ENCODE measurements at regions of chr5 and their contacts with region 1.

Region 1: GRCh38 chr5:76292620-76293322 is 110.3 kb upstream of the IQGAP2 start:
- DNase-seq: no peak
- ATAC-seq: no peak
- H3K4me3 Mint-ChIP-seq: no peak overlapping the region
- H3K27ac Mint-ChIP-seq: no peak overlapping the region
- H3K4me1 Mint-ChIP-seq: no peaks in the 10 kb centered on the region
- H3K27me3 Mint-ChIP-seq: no peaks in the 10 kb centered on the region

Region 2: GRCh38 chr5:76252437-76252836 is 40.3 kb before region 1 on chr5:
- CTCF ChIA-PET with region 1: no interaction called
- POLR2A ChIA-PET with region 1: no interaction called
- intact Hi-C with region 1: no loop called
- DNase-seq: no peak
- ATAC-seq: no peak
- H3K4me3 Mint-ChIP-seq: no peak overlapping the region
- H3K27ac Mint-ChIP-seq: no peak overlapping the region
- H3K4me1 Mint-ChIP-seq: peaks cover 7% of the 10 kb centered on the region
- H3K27me3 Mint-ChIP-seq: peaks cover 9% of the 10 kb centered on the region

Region 3: DNA sequence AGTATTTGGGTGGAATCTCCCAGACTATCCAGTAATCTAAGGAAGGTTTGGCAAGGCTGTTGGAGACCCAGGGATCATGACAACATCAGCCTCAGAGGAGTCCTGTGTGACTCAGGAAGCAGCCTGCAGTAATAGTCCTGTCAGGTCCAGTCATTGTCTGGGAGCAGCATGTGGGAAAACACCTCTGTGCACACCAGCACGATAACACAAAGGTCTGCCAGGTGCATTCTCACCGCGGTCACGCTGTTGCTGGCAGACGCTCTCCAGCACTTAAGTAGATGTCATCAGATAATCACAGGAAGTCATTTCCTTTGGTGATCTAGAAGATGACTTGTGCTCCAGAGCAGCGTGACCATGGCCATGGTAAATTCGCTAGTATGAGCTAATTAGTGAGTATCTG is 11.2 kb after region 1 on chr5:
- CTCF ChIA-PET with region 1: interaction called, 11 read pairs
- POLR2A ChIA-PET with region 1: no interaction called
- intact Hi-C with region 1: no loop called
- DNase-seq: peak; percentile 65
- ATAC-seq: peak; percentile 92
- H3K4me3 Mint-ChIP-seq: no peak overlapping the region
- H3K27ac Mint-ChIP-seq: no peak overlapping the region
- H3K4me1 Mint-ChIP-seq: peaks cover 18% of the 10 kb centered on the region
- H3K27me3 Mint-ChIP-seq: no peaks in the 10 kb centered on the region

Region 4: GRCh38 chr5:76337953-76338451 is 45.2 kb after region 1 on chr5:
- CTCF ChIA-PET with region 1: no interaction called
- POLR2A ChIA-PET with region 1: no interaction called
- intact Hi-C with region 1: no loop called
- DNase-seq: peak; percentile 47
- ATAC-seq: peak; percentile 80
- H3K4me3 Mint-ChIP-seq: no peak overlapping the region
- H3K27ac Mint-ChIP-seq: no peak overlapping the region
- H3K4me1 Mint-ChIP-seq: peaks cover 25% of the 10 kb centered on the region
- H3K27me3 Mint-ChIP-seq: no peaks in the 10 kb centered on the region

Region 5: DNA sequence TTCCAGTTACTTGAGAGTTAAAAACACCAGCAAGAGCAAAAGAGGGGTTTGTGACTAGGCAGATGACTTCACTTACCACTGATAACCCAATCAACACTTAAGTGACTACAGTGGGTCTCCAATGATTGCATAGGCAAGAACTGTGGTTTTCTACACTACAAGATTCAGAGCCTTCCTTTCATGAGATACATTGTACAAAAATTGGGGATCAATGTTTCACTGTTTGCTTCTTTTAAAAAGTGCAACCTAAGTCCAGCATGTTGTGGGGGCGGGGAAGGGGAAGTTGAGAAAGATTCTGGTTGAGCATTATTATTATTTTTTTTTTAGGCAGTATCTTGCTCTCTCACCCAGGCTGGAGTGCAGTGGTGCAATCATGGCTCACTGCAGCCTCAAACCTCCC is 113.9 kb after region 1 on chr5:
- CTCF ChIA-PET with region 1: no interaction called
- POLR2A ChIA-PET with region 1: no interaction called
- intact Hi-C with region 1: no loop called
- DNase-seq: peak; percentile 23
- ATAC-seq: no peak
- H3K4me3 Mint-ChIP-seq: no peak overlapping the region
- H3K27ac Mint-ChIP-seq: peak overlapping the region; percentile 83
- H3K4me1 Mint-ChIP-seq: peaks cover 63% of the 10 kb centered on the region
- H3K27me3 Mint-ChIP-seq: no peaks in the 10 kb centered on the region

Region 6: GRCh38 chr5:77312411-77312810 is 1019.6 kb after region 1 on chr5:
- CTCF ChIA-PET with region 1: no interaction called
- POLR2A ChIA-PET with region 1: no interaction called
- intact Hi-C with region 1: no loop called
- DNase-seq: no peak
- ATAC-seq: no peak
- H3K4me3 Mint-ChIP-seq: no peak overlapping the region
- H3K27ac Mint-ChIP-seq: no peak overlapping the region
- H3K4me1 Mint-ChIP-seq: no peaks in the 10 kb centered on the region
- H3K27me3 Mint-ChIP-seq: no peaks in the 10 kb centered on the region